Activated CD8-positive, alpha-beta T cell treated with anti-CD3 and anti-CD28 coated beads, Interleukin-2, amount 10 ng/mL, durations not matched to agents 7 days and 5 days (primary cell): ENCODE measurements at regions of chr2 and their contacts with region 1.

Region 1: GRCh38 chr2:234425619-234426603 is 71.0 kb downstream of the ARL4C start:
- DNase-seq: peak; percentile 88
- ATAC-seq: peak; percentile 88
- H3K4me3 Mint-ChIP-seq: peak overlapping the region; percentile 56
- H3K27ac Mint-ChIP-seq: peak overlapping the region; percentile 97
- H3K4me1 Mint-ChIP-seq: peaks cover 87% of the 10 kb centered on the region
- H3K27me3 Mint-ChIP-seq: no peaks in the 10 kb centered on the region

Region 2: DNA sequence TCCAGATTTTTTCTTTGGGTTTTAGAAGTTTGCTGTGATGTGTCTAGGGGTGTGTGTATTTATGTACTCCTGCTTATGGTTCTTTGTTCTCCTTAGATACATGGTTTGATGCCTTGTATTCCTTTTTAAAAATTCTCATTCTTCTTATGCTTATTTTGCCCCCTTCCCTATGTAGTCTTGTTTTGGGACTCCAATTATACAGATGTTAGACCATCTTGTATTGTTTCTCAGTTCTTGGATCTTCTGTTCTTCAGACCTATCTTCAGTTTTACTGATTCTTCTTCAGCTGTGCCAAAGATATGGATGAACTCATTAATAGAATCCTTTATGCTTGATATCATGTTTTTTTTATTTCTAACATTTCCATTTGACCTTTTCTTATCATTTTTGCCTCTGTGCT is 543.6 kb before region 1 on chr2:
- CTCF ChIA-PET with region 1: no interaction called
- POLR2A ChIA-PET with region 1: no interaction called
- DNase-seq: no peak
- ATAC-seq: no peak
- H3K4me3 Mint-ChIP-seq: no peak overlapping the region
- H3K27ac Mint-ChIP-seq: no peak overlapping the region
- H3K4me1 Mint-ChIP-seq: no peaks in the 10 kb centered on the region
- H3K27me3 Mint-ChIP-seq: peaks cover 16% of the 10 kb centered on the region

Region 3: DNA sequence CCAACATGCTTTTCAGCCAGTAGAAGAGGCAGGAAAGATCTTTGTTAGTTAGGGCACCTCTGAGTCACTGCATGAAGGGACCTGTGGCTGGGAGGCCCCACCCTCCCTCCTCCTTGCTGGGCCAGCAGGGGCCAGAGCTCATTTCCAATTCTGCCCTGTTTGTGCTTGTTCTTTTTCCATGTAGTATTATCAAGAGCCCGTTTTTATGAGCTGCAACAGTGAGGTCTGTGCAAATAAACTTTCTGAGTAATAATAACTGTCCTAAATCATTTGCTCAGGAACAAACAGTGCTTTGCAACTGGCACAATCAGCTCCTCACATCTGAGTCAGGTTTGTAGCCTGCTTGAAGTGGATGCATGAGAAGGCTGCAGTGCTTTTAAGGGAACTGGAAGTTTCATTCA is 57.0 kb before region 1 on chr2:
- CTCF ChIA-PET with region 1: interaction called, 10 read pairs
- POLR2A ChIA-PET with region 1: interaction called, 3 read pairs
- DNase-seq: peak; percentile 66
- ATAC-seq: peak; percentile 88
- H3K4me3 Mint-ChIP-seq: no peak overlapping the region
- H3K27ac Mint-ChIP-seq: peak overlapping the region; percentile 64
- H3K4me1 Mint-ChIP-seq: peaks cover 72% of the 10 kb centered on the region
- H3K27me3 Mint-ChIP-seq: no peaks in the 10 kb centered on the region

Region 4: GRCh38 chr2:234411793-234412192 is 14.1 kb before region 1 on chr2:
- CTCF ChIA-PET with region 1: interaction called, 15 read pairs
- POLR2A ChIA-PET with region 1: interaction called, 6 read pairs
- DNase-seq: no peak
- ATAC-seq: no peak
- H3K4me3 Mint-ChIP-seq: no peak overlapping the region
- H3K27ac Mint-ChIP-seq: no peak overlapping the region
- H3K4me1 Mint-ChIP-seq: peaks cover 12% of the 10 kb centered on the region
- H3K27me3 Mint-ChIP-seq: no peaks in the 10 kb centered on the region

Region 5: GRCh38 chr2:234446404-234447076 is 20.6 kb after region 1 on chr2:
- CTCF ChIA-PET with region 1: interaction called, 12 read pairs
- POLR2A ChIA-PET with region 1: interaction called, 80 read pairs
- DNase-seq: peak; percentile 94
- ATAC-seq: peak; percentile 90
- H3K4me3 Mint-ChIP-seq: peak overlapping the region; percentile 66
- H3K27ac Mint-ChIP-seq: peak overlapping the region; percentile 99
- H3K4me1 Mint-ChIP-seq: peaks cover 86% of the 10 kb centered on the region
- H3K27me3 Mint-ChIP-seq: no peaks in the 10 kb centered on the region

Region 6: GRCh38 chr2:234451852-234452625 is 26.1 kb after region 1 on chr2:
- CTCF ChIA-PET with region 1: interaction called, 17 read pairs
- POLR2A ChIA-PET with region 1: interaction called, 80 read pairs
- DNase-seq: no peak
- ATAC-seq: peak; percentile 7
- H3K4me3 Mint-ChIP-seq: peak overlapping the region; percentile 85
- H3K27ac Mint-ChIP-seq: peak overlapping the region; percentile 92
- H3K4me1 Mint-ChIP-seq: peaks cover 86% of the 10 kb centered on the region
- H3K27me3 Mint-ChIP-seq: no peaks in the 10 kb centered on the region

Region 7: DNA sequence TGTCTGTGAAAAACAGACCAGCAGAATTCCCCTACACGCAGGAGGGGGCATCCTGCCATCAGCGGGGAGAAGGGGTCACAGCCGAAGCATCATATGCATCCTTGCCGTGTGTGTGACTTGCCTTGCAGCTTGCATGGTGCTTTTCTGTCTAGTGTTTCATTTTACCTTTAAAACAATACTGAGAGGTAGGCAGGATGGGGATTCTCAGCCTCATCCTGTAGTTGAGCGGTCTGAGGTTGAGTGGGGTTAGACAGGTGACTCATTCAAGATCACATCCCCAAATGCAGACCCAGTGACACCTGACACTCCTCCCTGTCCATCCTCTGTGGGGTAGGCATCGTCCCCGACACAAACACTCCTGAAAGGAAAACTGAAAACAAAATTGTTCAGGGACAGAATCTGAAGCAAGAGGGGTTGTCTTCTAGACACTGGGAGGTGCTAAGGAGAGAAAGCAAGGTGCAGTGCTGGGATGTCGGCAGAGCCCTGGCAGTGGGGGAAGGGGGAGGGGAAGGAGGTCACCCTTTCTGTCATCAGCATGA is 63.1 kb after region 1 on chr2:
- CTCF ChIA-PET with region 1: no interaction called
- POLR2A ChIA-PET with region 1: interaction called, 99 read pairs
- DNase-seq: peak; percentile 91
- ATAC-seq: peak; percentile 77
- H3K4me3 Mint-ChIP-seq: peak overlapping the region; percentile 77
- H3K27ac Mint-ChIP-seq: peak overlapping the region; percentile 97
- H3K4me1 Mint-ChIP-seq: peaks cover 88% of the 10 kb centered on the region
- H3K27me3 Mint-ChIP-seq: no peaks in the 10 kb centered on the region

Region 8: DNA sequence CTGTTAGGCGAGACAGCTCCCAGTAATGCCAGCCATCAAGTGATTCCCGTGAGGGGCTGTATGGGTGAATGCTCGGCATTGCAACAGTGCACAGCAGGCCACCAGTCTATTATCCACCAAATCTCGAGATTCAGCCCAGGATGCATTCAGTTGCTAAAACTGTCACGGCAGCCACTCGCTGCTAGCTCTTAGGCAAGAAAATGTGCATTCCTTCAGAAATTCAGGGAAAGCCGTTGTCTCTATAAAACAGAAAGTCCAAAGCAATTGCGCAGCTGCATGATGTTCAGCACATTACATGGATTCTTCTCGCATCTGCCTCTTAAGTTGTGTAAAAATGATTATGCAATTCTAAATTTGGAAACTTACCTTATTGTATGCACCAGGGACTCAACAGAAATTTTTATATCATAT is 282.3 kb after region 1 on chr2:
- CTCF ChIA-PET with region 1: no interaction called
- POLR2A ChIA-PET with region 1: no interaction called
- DNase-seq: no peak
- ATAC-seq: no peak
- H3K4me3 Mint-ChIP-seq: no peak overlapping the region
- H3K27ac Mint-ChIP-seq: no peak overlapping the region
- H3K4me1 Mint-ChIP-seq: no peaks in the 10 kb centered on the region
- H3K27me3 Mint-ChIP-seq: peaks cover 2% of the 10 kb centered on the region